ENCODE measurements at regions of chr1 and their contacts with region 1.

Region 1: GRCh38 chr1:42456010-42456758 is at the starts of genes PPCS and ZMYND12:
- DNase-seq: peak; percentile 97
- ATAC-seq: peak; percentile 92
- H3K4me3 Mint-ChIP-seq: peak within 1 kb of the TSS; percentile 80
- H3K27ac Mint-ChIP-seq: peak within 1 kb of the TSS; percentile 99
- H3K4me1 Mint-ChIP-seq: peaks cover 27% of the 10 kb centered on the region
- H3K27me3 Mint-ChIP-seq: no peaks in the 10 kb centered on the region
- total RNA-seq, gene PPCS: 47.3 to 47.6 TPM
- total RNA-seq, gene ZMYND12: 0.64 to 1.6 TPM

Region 2: GRCh38 chr1:42380586-42381279 is 75.5 kb before region 1 on chr1 and contains the start of gene RIMKLA:
- CTCF ChIA-PET with region 1: no interaction called
- POLR2A ChIA-PET with region 1: no interaction called
- intact Hi-C with region 1: loop called in 1 of 2 experiments (anchors 1 kb)
- DNase-seq: peak; percentile 74
- ATAC-seq: peak; percentile 92
- H3K4me3 Mint-ChIP-seq: peak within 1 kb of the TSS; percentile 70
- H3K27ac Mint-ChIP-seq: peak within 1 kb of the TSS; percentile 5
- H3K4me1 Mint-ChIP-seq: peaks cover 3% of the 10 kb centered on the region
- H3K27me3 Mint-ChIP-seq: peaks cover 37% of the 10 kb centered on the region
- total RNA-seq, gene RIMKLA: 6.7 to 8.9 TPM

Region 3: DNA sequence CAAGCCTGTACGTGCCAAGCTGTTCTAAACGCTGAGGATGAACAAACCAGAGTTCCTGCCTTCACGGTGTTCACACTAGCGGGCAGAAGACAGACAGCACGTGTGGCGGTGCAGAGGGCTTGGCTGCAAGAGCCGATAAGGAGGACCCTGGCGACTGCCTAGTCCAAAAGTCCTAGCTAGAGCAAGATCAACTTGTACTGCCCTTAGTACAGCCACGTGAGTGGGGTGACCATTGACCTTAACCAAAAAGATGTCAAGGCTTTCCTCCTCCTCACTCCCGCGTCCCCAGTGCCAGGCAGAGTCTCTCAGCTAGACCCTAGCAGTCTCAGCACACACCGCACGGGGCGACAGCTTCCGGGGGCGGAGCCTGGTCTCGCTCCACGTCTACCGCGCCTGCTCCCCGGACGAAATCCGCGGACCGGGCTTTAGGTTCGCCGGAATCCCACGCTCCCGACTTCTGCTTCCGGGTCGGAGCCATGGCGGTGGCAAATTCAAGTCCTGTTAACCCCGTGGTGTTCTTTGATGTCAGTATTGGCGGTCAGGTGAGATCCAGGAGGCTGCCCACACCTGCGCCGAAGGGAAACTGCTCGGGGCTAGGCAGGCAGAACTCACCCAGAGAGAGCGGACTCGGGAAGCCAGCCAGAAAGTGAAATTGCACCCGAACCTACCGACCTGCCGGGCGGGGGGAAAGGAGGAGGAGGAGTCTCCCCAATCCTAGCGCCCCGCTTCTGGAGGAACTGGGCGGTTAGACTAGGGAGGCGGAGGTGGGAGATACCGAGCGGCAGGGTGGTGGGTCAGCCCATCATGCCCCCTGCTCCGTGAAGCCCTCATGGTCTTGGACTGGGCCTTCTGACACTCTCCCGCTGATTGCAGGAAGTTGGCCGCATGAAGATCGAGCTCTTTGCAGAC is 202.0 kb after region 1 on chr1 and contains the start of gene PPIH:
- CTCF ChIA-PET with region 1: no interaction called
- POLR2A ChIA-PET with region 1: no interaction called
- intact Hi-C with region 1: loop called in 1 of 2 experiments (anchors 1 kb)
- DNase-seq: peak; percentile 98
- ATAC-seq: peak; percentile 97
- H3K4me3 Mint-ChIP-seq: peak within 1 kb of the TSS; percentile 97
- H3K27ac Mint-ChIP-seq: peak within 1 kb of the TSS; percentile 97
- H3K4me1 Mint-ChIP-seq: peaks cover 39% of the 10 kb centered on the region
- H3K27me3 Mint-ChIP-seq: no peaks in the 10 kb centered on the region
- total RNA-seq, gene PPIH: 111 to 114 TPM

Region 4: GRCh38 chr1:42766741-42767509 is 310.7 kb after region 1 on chr1 and contains the starts of genes C1orf50 and P3H1:
- CTCF ChIA-PET with region 1: no interaction called
- POLR2A ChIA-PET with region 1: no interaction called
- intact Hi-C with region 1: loop called in 1 of 2 experiments (anchors 1 kb)
- DNase-seq: peak; percentile 100
- ATAC-seq: peak; percentile 96
- H3K4me3 Mint-ChIP-seq: no peak within 1 kb of the TSS
- H3K27ac Mint-ChIP-seq: peak within 1 kb of the TSS; percentile 85
- H3K4me1 Mint-ChIP-seq: peaks cover 36% of the 10 kb centered on the region
- H3K27me3 Mint-ChIP-seq: no peaks in the 10 kb centered on the region
- total RNA-seq, gene C1orf50: 4.0 to 8.0 TPM
- total RNA-seq, gene P3H1: 24.3 to 28.8 TPM

Region 5: DNA sequence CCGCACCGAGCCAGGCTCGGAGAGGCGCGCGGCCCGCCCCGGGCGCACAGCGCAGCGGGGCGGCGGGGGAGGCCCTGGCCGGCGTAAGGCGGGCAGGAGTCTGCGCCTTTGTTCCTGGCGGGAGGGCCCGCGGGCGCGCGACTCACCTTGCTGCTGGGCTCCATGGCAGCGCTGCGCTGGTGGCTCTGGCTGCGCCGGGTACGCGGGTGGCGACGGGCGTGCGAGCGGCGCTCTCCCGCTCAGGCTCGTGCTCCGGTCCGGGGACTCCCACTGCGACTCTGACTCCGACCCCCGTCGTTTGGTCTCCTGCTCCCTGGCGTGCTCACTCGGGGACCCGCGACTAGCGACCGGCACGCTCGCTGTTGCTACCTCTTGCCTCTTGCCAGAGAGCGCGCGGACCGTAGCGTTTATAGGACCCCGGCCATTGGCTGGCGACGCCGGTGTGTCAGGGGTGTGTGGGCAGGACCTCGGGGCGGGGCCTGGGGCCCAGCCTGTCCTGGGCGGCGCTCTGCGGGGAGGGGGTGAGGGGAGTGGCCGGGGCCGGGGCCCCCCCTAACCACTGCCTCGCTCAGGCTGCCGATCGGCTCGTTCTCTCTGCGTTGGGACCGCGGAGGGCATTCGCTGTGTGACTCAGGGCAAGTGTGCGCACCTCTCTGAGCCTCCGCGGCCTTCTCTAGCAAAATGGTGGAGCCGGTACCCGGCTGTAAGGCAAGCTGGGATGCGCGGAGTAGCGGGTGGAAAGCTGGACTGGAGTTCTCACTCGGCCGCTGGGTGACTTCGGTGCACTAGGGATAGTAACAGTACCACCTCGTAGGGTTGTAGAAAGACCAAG is 502.5 kb after region 1 on chr1 and contains the start of gene SLC2A1:
- CTCF ChIA-PET with region 1: no interaction called
- POLR2A ChIA-PET with region 1: no interaction called
- intact Hi-C with region 1: loop called in 1 of 2 experiments (anchors 1 kb)
- DNase-seq: peak; percentile 99
- ATAC-seq: peak; percentile 89
- H3K4me3 Mint-ChIP-seq: peak within 1 kb of the TSS; percentile 89
- H3K27ac Mint-ChIP-seq: peak within 1 kb of the TSS; percentile 97
- H3K4me1 Mint-ChIP-seq: peaks cover 47% of the 10 kb centered on the region
- H3K27me3 Mint-ChIP-seq: peaks cover 6% of the 10 kb centered on the region
- total RNA-seq, gene SLC2A1: 115 to 125 TPM

Region 6: DNA sequence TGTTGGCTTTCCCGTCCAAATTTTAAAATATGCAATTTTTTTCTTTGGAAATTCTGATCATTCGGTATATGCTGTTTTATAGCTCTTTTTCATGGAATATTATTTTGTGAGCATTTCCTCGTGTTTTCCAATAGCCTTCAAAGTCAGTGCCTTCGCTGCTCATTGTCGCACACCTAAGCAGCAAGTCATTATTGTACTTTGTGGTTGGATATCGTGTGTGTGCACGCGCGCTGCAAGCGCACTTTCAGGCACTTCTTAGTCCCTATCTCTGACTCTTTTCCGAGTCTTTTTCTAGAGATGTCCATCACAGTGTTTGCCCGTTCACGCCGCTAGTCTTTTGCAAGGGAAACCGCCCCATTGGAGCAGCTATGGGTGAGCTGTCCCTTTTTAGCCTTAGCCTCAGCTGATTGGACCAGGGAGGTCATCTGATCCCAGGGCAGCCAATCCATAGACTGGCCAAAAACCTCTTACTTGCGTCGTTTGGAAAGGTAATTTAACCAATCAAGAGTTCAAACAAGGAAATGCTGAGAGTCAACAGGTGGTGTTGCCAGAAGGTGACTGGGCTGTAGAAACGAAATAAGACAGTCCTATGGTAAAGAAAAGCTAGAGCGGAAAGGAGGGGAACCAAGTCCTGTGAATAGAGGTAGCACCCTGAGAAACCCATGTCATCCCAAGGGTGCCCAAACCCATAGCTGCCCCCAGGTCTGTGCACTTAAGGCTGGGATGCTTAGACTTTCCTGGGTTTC is 998.3 kb after region 1 on chr1:
- CTCF ChIA-PET with region 1: no interaction called
- POLR2A ChIA-PET with region 1: no interaction called
- intact Hi-C with region 1: loop called in 1 of 2 experiments (anchors 10 kb)
- DNase-seq: peak; percentile 78
- ATAC-seq: peak; percentile 92
- H3K4me3 Mint-ChIP-seq: peak overlapping the region; percentile 79
- H3K27ac Mint-ChIP-seq: peak overlapping the region; percentile 79
- H3K4me1 Mint-ChIP-seq: peaks cover 17% of the 10 kb centered on the region
- H3K27me3 Mint-ChIP-seq: peaks cover 16% of the 10 kb centered on the region

Measured in activated CD4-positive, alpha-beta T cell treated with anti-CD3 and anti-CD28 coated beads for 36 hours (primary cell).